ENCODE measurements at regions of chr16 and their contacts with region 1.

Region 1: GRCh38 chr16:1826691-1827575 is at the starts of genes FAHD1 and HAGH:
- DNase-seq: peak; percentile 91
- H3K4me3 Mint-ChIP-seq: peak within 1 kb of the TSS; percentile 92
- H3K27ac Mint-ChIP-seq: peak within 1 kb of the TSS; percentile 85
- H3K4me1 Mint-ChIP-seq: peaks cover 26% of the 10 kb centered on the region
- H3K27me3 Mint-ChIP-seq: no peaks in the 10 kb centered on the region
- total RNA-seq, gene FAHD1: 19.4 and 20.2 TPM in 2 replicates
- total RNA-seq, gene HAGH: 57.8 and 58.7 TPM in 2 replicates

Region 2: GRCh38 chr16:1772736-1773584 is 54.0 kb before region 1 on chr16 and contains the starts of genes EME2 and MRPS34:
- intact Hi-C with region 1: loop called (anchors 1 kb)
- DNase-seq: peak; percentile 82
- H3K4me3 Mint-ChIP-seq: peak within 1 kb of the TSS; percentile 100
- H3K27ac Mint-ChIP-seq: peak within 1 kb of the TSS; percentile 98
- H3K4me1 Mint-ChIP-seq: peaks cover 8% of the 10 kb centered on the region
- H3K27me3 Mint-ChIP-seq: no peaks in the 10 kb centered on the region
- total RNA-seq, gene EME2: 31.0 and 32.7 TPM in 2 replicates
- total RNA-seq, gene MRPS34: 209 and 215 TPM in 2 replicates

Region 3: DNA sequence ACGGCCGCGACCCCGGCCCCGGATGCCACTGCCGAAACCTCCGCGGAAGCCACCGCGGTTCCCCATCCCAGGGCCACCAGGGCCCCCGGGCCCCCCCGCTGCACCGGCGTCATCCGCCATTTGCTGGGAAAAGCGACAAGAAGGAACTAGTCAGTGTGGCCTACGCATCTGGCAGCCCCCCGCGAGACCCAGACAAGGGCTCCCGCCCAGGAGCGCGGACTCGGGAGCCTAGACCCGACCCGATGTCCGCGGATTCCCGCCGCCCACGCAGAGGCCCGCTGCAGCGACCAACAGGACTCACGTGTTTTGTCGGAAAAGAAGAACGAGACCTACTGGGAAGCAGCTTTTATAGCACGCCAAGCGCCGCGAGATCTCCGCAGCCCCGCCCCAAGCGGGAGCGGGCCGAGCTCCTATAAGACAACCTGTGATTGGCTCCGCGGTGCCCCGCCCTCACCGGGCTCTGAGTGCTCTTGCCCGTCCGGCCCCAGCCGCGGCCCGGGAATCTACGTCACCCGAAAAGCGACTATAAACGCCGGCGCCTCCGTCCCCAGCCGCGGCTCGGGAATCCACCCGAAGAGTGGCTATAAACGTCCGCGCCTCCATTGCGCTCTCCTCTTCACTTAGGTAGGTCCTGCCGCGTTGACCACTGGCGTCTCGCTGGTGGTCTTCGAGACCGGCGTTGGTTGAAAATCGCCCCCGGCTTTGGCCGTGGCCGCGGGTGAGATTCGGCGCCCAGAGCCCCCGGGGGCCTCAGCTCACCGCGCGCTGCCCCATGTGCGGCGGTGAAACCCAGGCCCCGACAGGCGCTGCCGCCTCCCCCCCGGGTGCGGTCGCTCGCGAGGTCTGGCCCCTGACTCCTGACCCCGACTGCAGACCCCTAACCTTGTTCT is 137.8 kb after region 1 on chr16 and contains the start of gene RPS2:
- intact Hi-C with region 1: loop called (anchors 2 kb)
- DNase-seq: peak; percentile 99
- H3K4me3 Mint-ChIP-seq: peak within 1 kb of the TSS; percentile 100
- H3K27ac Mint-ChIP-seq: peak within 1 kb of the TSS; percentile 97
- H3K4me1 Mint-ChIP-seq: peaks cover 34% of the 10 kb centered on the region
- H3K27me3 Mint-ChIP-seq: no peaks in the 10 kb centered on the region
- total RNA-seq, gene RPS2: 3,144 and 3,145 TPM in 2 replicates

Region 4: GRCh38 chr16:1983544-1984346 is 156.8 kb after region 1 on chr16 and contains the start of gene GFER:
- intact Hi-C with region 1: no loop called
- DNase-seq: peak; percentile 80
- H3K4me3 Mint-ChIP-seq: peak within 1 kb of the TSS; percentile 84
- H3K27ac Mint-ChIP-seq: peak within 1 kb of the TSS; percentile 29
- H3K4me1 Mint-ChIP-seq: peaks cover 4% of the 10 kb centered on the region
- H3K27me3 Mint-ChIP-seq: peaks cover 32% of the 10 kb centered on the region
- total RNA-seq, gene GFER: 46.2 and 54.0 TPM in 2 replicates

Measured in activated T-helper 1 cell treated with anti-CD3 and anti-CD28 coated beads, Interleukin-12 subunit alpha, Interleukin-12 subunit beta, Interleukin-2, Interleukin-4 antibody, amounts not matched to agents 30 ng/mL and 10 ng/mL and 1 ng/mL, durations not matched to agents 14 hours and 24 hours and 36 hours (primary cell).